T-cell (primary cell): ENCODE measurements at regions of chr11 and their contacts with region 1.

Region 1: DNA sequence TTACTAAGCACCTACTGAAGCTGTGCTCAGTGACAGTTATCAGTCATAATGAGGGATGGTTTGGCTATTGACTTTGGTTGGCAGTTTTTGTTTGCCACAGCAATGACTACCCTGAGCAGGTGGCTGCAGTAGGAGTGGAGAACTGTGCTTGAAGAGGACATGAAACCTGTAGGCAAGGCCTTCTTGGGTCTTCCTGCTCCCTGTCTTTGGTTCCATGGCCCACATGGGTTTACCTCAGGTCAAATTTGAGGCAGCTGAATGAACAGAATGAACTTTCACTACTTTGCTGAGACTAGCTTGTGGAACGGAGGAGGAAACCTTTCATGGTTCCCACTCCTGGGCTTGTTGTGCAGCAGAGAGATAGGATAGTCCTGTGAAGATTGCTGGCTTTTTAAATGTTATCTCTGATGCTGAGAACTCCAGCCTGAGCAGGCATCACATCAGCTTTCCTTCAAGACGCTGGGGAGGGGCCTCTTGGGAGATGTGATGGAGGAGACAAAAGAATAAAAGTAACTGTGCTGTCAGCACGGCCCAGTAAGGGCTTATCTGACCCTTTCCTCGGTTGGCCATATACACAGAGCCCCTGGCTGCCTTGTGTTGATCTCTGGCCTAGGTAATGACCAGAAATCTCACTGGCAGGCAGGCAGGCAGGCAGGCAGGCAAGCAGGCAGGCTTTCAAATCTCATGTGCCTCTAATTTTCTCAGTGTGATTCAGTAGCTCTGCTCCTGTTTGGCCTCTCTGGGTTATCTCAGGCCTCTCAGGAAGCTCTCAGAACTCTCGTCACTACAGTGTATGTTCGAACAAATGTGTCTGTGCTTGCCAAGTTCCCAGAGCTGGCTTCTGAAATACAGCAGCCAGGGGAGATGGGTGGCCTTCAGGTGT is 12.0 kb downstream of the STIM1 start:
- DNase-seq: peak in 7 of 35 experiments; percentile 4 to 56 (median 18)
- ATAC-seq: peak; percentile 33 to 71 (median 49)
- H3K4me3 ChIP-seq: no peak overlapping the region
- H3K4me3 Mint-ChIP-seq: peak overlapping the region in 2 of 3 donors; percentile 47 to 58
- H3K27ac ChIP-seq: peak overlapping the region; percentile 34
- H3K27ac Mint-ChIP-seq: peak overlapping the region; percentile 83 to 92
- H3K4me1 ChIP-seq: peaks cover 54 to 63% of the 10 kb centered on the region in 2 experiments
- H3K4me1 Mint-ChIP-seq: peaks cover 90 to 96% (median 92%) of the 10 kb centered on the region in 3 donors
- H3K27me3 ChIP-seq: no peaks in the 10 kb centered on the region
- H3K27me3 Mint-ChIP-seq: no peaks in the 10 kb centered on the region

Region 2: GRCh38 chr11:3849297-3849874 is 18.1 kb before region 1 on chr11:
- CTCF ChIA-PET with region 1: interaction called, 4 to 17 read pairs
- POLR2A ChIA-PET with region 1: interaction called in 1 of 2 experiments, 5 read pairs
- DNase-seq: peak in 16 of 35 experiments; percentile 31 to 82 (median 46)
- ATAC-seq: peak; percentile 49 to 68 (median 64)
- H3K4me3 ChIP-seq: no peak overlapping the region
- H3K4me3 Mint-ChIP-seq: no peak overlapping the region
- H3K27ac ChIP-seq: no peak overlapping the region
- H3K27ac Mint-ChIP-seq: peak overlapping the region; percentile 19 to 23
- H3K4me1 ChIP-seq: peaks cover 25 to 37% of the 10 kb centered on the region in 2 experiments
- H3K4me1 Mint-ChIP-seq: peaks cover 41 to 58% (median 42%) of the 10 kb centered on the region in 3 donors
- H3K27me3 ChIP-seq: no peaks in the 10 kb centered on the region
- H3K27me3 Mint-ChIP-seq: no peaks in the 10 kb centered on the region

Region 3: GRCh38 chr11:3896644-3897043 is 29.2 kb after region 1 on chr11:
- CTCF ChIA-PET with region 1: no interaction called
- POLR2A ChIA-PET with region 1: no interaction called
- DNase-seq: no peak
- ATAC-seq: no peak
- H3K4me3 ChIP-seq: no peak overlapping the region
- H3K4me3 Mint-ChIP-seq: no peak overlapping the region
- H3K27ac ChIP-seq: no peak overlapping the region
- H3K27ac Mint-ChIP-seq: peak overlapping the region in 1 of 2 donors; percentile 24
- H3K4me1 ChIP-seq: peaks cover 23 to 37% of the 10 kb centered on the region in 2 experiments
- H3K4me1 Mint-ChIP-seq: peaks cover 63 to 66% (median 64%) of the 10 kb centered on the region in 3 donors
- H3K27me3 ChIP-seq: no peaks in the 10 kb centered on the region
- H3K27me3 Mint-ChIP-seq: no peaks in the 10 kb centered on the region

Region 4: GRCh38 chr11:3927133-3927796 is 59.8 kb after region 1 on chr11:
- CTCF ChIA-PET with region 1: interaction called, 3 to 12 read pairs
- POLR2A ChIA-PET with region 1: no interaction called
- DNase-seq: no peak
- ATAC-seq: peak in 1 of 4 experiments; percentile 45
- H3K4me3 ChIP-seq: no peak overlapping the region
- H3K4me3 Mint-ChIP-seq: no peak overlapping the region
- H3K27ac ChIP-seq: no peak overlapping the region
- H3K27ac Mint-ChIP-seq: peak overlapping the region in 1 of 2 donors; percentile 79
- H3K4me1 ChIP-seq: peaks cover 4 to 6% of the 10 kb centered on the region in 2 experiments
- H3K4me1 Mint-ChIP-seq: peaks cover 39 to 59% (median 57%) of the 10 kb centered on the region in 3 donors
- H3K27me3 ChIP-seq: no peaks in the 10 kb centered on the region
- H3K27me3 Mint-ChIP-seq: no peaks in the 10 kb centered on the region

Region 5: DNA sequence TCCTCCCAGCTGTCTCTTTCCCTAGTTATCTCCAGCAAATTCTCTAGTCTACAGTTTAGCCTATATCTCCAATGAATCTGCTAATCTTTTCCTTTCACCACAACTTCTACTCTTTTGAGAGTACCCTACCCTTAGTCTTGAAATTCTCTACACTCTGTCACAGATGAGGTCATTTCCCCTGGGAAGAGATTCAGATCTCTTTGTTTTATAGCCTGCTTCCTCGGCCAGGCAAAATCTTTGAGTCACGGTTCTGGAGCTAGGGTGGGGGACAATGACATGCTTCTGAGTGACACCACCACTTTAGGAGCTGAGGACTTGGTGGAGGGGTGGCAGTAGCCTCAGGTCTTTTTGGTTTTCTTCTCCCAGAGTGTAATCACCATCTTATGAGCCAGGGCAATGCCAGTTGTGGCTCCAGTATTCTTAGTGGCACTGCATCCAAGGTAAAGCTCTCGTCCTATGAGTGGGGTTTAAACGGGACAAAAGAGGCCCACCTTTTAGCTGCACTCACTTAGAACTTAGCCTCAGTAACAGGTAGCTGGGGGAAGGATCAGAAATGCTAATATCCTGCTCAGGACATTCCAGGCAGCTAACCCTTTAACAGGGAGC is 128.6 kb after region 1 on chr11:
- CTCF ChIA-PET with region 1: no interaction called
- POLR2A ChIA-PET with region 1: interaction called in 1 of 2 experiments, 13 read pairs
- DNase-seq: no peak
- ATAC-seq: no peak
- H3K4me3 ChIP-seq: no peak overlapping the region
- H3K4me3 Mint-ChIP-seq: no peak overlapping the region
- H3K27ac ChIP-seq: no peak overlapping the region
- H3K27ac Mint-ChIP-seq: peak overlapping the region in 1 of 2 donors; percentile 64
- H3K4me1 ChIP-seq: peaks cover 5 to 7% of the 10 kb centered on the region in 2 experiments
- H3K4me1 Mint-ChIP-seq: peaks cover 48 to 68% (median 59%) of the 10 kb centered on the region in 3 donors
- H3K27me3 ChIP-seq: no peaks in the 10 kb centered on the region
- H3K27me3 Mint-ChIP-seq: no peaks in the 10 kb centered on the region